ENCODE measurements at regions of chr1 and their contacts with region 1.

Region 1: DNA sequence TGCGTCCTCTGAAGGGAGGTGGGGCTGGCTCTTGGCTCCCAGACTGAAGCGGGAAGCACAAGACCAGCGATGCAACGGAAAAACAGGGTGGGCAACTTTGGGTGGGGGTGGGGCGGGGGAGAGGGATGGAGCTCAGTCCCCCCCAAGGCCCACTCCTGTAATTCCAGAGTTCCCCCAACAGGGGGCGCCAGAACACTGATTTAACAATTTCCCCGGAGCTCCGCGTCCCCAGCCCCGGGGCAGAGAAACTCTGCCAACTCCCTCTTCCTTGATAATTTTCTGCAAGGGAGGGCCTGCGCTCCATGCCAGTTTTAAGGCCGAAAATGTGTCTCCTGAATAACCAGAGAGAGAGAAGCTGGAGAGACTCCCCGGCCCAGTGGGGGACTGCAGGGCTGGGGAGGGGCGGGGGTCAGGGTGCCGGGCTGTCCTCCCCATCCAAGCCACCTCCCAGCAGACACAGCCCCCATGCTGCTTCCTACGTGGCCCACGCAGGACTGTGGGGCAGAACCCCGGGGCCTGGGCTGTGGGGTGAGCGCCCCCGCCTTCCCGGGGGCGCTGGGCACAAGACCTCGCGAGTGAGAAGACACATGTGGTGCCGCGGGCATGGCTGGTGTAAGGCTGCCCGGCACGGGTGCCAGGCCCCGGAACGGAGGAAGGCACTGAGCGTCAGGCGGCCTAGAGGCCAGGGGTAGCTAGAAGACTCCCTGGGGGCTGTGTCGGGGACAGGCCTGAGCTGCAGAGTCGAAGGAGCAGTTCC is 51.4 kb downstream of the KIF21B start:
- DNase-seq: peak; percentile 51 to 60 (median 56)
- H3K4me3 ChIP-seq: no peak overlapping the region
- H3K4me3 Mint-ChIP-seq: no peak overlapping the region
- H3K27ac ChIP-seq: no peak overlapping the region
- H3K27ac Mint-ChIP-seq: peak overlapping the region in 1 of 7 donors; percentile 38
- H3K4me1 ChIP-seq: no peaks in the 10 kb centered on the region
- H3K4me1 Mint-ChIP-seq: peaks cover 0 to 2% (median 0%) of the 10 kb centered on the region in 4 donors
- H3K27me3 ChIP-seq: no peaks in the 10 kb centered on the region
- H3K27me3 Mint-ChIP-seq: no peaks in the 10 kb centered on the region

Region 2: GRCh38 chr1:200751717-200752116 is 220.4 kb before region 1 on chr1:
- CTCF ChIA-PET with region 1: no interaction called
- POLR2A ChIA-PET with region 1: no interaction called
- intact Hi-C with region 1: no loop called
- DNase-seq: no peak
- H3K4me3 ChIP-seq: no peak overlapping the region
- H3K4me3 Mint-ChIP-seq: no peak overlapping the region
- H3K27ac ChIP-seq: no peak overlapping the region
- H3K27ac Mint-ChIP-seq: peak overlapping the region in 2 of 7 donors; percentile 2 to 66
- H3K4me1 ChIP-seq: no peaks in the 10 kb centered on the region
- H3K4me1 Mint-ChIP-seq: peaks cover 0 to 6% (median 4%) of the 10 kb centered on the region in 4 donors
- H3K27me3 ChIP-seq: no peaks in the 10 kb centered on the region
- H3K27me3 Mint-ChIP-seq: no peaks in the 10 kb centered on the region

Region 3: DNA sequence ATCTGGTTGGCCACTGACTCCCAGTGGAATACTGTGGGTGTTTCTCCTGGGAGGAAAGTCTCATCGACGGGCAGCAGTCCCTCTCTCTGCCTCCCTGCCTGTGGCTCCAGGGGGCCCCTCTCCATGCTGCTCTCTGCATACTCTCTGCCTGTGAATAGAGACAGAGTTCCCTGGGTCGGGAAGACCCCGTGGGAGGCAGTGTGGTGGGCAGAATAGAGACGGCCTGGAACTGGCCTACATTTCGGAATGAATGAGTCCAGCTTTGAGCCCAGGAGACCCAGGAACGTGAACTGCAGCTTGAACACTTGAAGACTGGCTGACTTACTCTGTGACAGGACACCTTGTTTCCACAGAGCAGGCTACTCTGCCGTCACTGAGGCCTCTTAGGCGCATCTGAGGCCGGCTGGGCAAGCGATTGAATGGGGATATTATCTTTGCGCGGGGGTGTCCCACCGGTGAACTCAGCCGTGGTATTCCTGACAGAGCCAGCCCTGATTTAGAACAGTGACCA is 12.7 kb before region 1 on chr1:
- CTCF ChIA-PET with region 1: interaction called, 35 read pairs
- POLR2A ChIA-PET with region 1: no interaction called
- intact Hi-C with region 1: no loop called
- DNase-seq: no peak
- H3K4me3 ChIP-seq: no peak overlapping the region
- H3K4me3 Mint-ChIP-seq: no peak overlapping the region
- H3K27ac ChIP-seq: no peak overlapping the region
- H3K27ac Mint-ChIP-seq: peak overlapping the region in 1 of 7 donors; percentile 29
- H3K4me1 ChIP-seq: no peaks in the 10 kb centered on the region
- H3K4me1 Mint-ChIP-seq: peaks cover 0 to 6% (median 0%) of the 10 kb centered on the region in 4 donors
- H3K27me3 ChIP-seq: no peaks in the 10 kb centered on the region
- H3K27me3 Mint-ChIP-seq: peaks cover under 1 to 3% of the 10 kb centered on the region in 2 donors

Region 4: DNA sequence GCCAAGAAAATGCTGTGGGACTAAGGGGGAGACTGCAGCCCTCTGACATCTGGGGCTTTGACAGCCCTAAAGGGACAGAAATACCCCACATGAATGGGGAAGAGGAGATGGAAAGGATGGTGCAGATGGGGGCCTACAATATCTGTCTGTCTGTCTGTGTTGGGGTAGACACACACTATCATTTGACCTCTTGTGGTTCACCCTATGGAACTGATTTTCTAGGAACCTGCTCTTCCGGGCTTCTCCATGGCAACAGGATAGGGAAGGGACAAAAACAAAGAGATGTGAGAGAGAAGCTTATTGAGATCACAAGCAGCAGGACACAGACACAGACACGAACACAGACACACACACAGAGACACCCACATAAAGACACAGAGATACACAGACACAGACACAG is 34.3 kb after region 1 on chr1:
- CTCF ChIA-PET with region 1: interaction called, 12 read pairs
- POLR2A ChIA-PET with region 1: no interaction called
- intact Hi-C with region 1: no loop called
- DNase-seq: no peak
- H3K4me3 ChIP-seq: no peak overlapping the region
- H3K4me3 Mint-ChIP-seq: no peak overlapping the region
- H3K27ac ChIP-seq: no peak overlapping the region
- H3K27ac Mint-ChIP-seq: no peak overlapping the region
- H3K4me1 ChIP-seq: peaks cover 42% of the 10 kb centered on the region
- H3K4me1 Mint-ChIP-seq: peaks cover 21 to 26% (median 22%) of the 10 kb centered on the region in 4 donors
- H3K27me3 ChIP-seq: no peaks in the 10 kb centered on the region
- H3K27me3 Mint-ChIP-seq: no peaks in the 10 kb centered on the region

Region 5: GRCh38 chr1:201042779-201043461 is 70.8 kb after region 1 on chr1:
- CTCF ChIA-PET with region 1: interaction called, 488 read pairs
- POLR2A ChIA-PET with region 1: interaction called, 3 read pairs
- intact Hi-C with region 1: loop called (anchors 1 kb)
- DNase-seq: peak; percentile 67 to 74 (median 72)
- H3K4me3 ChIP-seq: no peak overlapping the region
- H3K4me3 Mint-ChIP-seq: no peak overlapping the region
- H3K27ac ChIP-seq: no peak overlapping the region
- H3K27ac Mint-ChIP-seq: peak overlapping the region in 2 of 7 donors; percentile 37 to 77
- H3K4me1 ChIP-seq: no peaks in the 10 kb centered on the region
- H3K4me1 Mint-ChIP-seq: peaks cover 0 to 3% (median 3%) of the 10 kb centered on the region in 4 donors
- H3K27me3 ChIP-seq: no peaks in the 10 kb centered on the region
- H3K27me3 Mint-ChIP-seq: peaks cover 0 to 3% of the 10 kb centered on the region in 2 donors

Region 6: GRCh38 chr1:201114236-201115131 is 142.4 kb after region 1 on chr1:
- CTCF ChIA-PET with region 1: interaction called, 45 read pairs
- POLR2A ChIA-PET with region 1: interaction called, 4 read pairs
- intact Hi-C with region 1: loop called (anchors 1 kb)
- DNase-seq: peak; percentile 69 to 79 (median 74)
- H3K4me3 ChIP-seq: peak overlapping the region; percentile 57 to 65
- H3K4me3 Mint-ChIP-seq: peak overlapping the region; percentile 89 to 96 (median 92)
- H3K27ac ChIP-seq: peak overlapping the region; percentile 38
- H3K27ac Mint-ChIP-seq: peak overlapping the region; percentile 75 to 93 (median 89)
- H3K4me1 ChIP-seq: peaks cover 11% of the 10 kb centered on the region
- H3K4me1 Mint-ChIP-seq: peaks cover 3 to 22% (median 10%) of the 10 kb centered on the region in 4 donors
- H3K27me3 ChIP-seq: no peaks in the 10 kb centered on the region
- H3K27me3 Mint-ChIP-seq: no peaks in the 10 kb centered on the region